Common myeloid progenitor, CD34-positive (primary cell): ENCODE measurements at regions of chr5 and their contacts with region 1.

Region 1: DNA sequence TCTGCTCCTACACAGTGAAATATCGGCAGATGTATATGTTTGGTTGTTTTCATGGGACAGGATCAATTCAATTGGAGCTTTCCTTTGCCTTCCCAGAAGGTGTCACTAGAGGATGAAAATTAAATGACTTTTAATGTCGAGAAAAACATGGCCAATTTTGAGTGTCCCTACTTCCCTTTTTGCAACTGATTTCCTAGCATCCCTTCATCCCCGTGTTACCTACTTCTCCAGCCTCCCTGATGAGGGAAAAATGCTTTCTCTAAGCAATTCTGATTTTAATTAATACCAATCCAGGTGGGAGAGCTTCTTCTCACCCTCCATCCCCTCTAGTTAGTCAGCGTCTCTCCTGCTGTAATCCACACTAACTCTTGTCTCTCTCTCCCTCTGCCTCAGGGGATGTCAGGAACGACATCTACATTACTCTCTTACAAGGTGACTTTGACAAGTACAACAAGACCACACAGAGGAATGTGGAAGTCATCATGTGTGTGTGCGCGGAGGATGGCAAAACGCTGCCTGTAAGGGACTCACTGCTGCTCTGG is 64.9 kb downstream of the DOCK2 start:
- DNase-seq: peak; percentile 9 to 32 (median 23)
- H3K4me3 ChIP-seq: no peak overlapping the region
- H3K27ac ChIP-seq: no peak overlapping the region
- H3K4me1 ChIP-seq: no peaks in the 10 kb centered on the region
- H3K27me3 ChIP-seq: no peaks in the 10 kb centered on the region

Region 2: DNA sequence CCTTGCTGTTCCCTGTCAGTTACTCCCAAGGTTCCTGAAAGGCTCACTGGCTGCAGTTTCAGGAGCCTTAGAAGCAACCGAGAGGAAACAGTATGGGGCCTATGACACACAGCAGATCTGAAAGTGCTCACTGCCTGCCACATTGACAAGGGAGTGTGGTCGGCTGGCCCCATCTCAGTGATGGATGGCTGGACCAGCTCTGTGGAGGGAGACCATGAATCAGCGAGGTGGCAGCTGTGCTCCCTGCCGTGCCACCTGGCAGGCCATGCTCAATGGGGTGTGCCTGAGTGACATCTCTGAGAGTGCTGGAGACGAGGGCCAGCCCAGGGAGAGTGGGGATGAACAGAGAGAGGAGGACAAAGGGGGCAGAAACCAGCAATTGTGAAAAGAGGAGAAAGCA is 15.8 kb before region 1 on chr5:
- CTCF ChIA-PET with region 1: no interaction called
- POLR2A ChIA-PET with region 1: no interaction called
- DNase-seq: no peak
- H3K4me3 ChIP-seq: no peak overlapping the region
- H3K27ac ChIP-seq: no peak overlapping the region
- H3K4me1 ChIP-seq: no peaks in the 10 kb centered on the region
- H3K27me3 ChIP-seq: no peaks in the 10 kb centered on the region

Region 3: DNA sequence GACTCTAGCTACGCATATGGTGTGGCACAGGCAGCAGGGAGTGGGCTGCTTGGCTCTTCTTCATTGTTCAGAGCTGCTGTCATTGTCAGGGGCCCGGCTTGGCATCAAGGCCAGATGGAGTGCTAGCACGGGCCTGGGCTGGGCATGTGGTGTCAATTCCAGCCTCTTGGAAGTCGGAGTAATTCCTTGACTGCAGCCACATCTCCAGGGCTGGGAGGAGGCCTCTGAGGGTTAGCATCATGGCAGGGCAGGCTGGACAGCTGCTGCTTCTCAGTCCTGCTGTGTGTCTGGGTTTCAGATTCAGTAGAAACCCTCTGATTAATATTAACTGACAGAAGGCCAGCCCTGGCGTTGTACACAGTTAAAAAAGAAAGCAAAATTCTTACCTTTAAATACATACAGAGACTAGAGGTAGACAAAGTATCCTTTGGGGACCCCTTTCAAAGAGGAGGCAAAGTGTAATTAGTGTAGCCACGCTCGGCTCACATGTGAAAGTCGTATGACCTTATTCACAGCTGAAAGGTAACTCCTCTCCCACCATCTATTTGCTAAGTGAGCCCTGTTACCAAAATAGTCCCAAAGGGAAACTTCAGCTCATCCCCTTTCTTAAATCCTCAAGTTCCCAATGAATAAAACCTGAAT is 61.5 kb after region 1 on chr5:
- CTCF ChIA-PET with region 1: no interaction called
- POLR2A ChIA-PET with region 1: no interaction called
- DNase-seq: no peak
- H3K4me3 ChIP-seq: no peak overlapping the region
- H3K27ac ChIP-seq: peak overlapping the region in 1 of 2 experiments; percentile 2
- H3K4me1 ChIP-seq: no peaks in the 10 kb centered on the region
- H3K27me3 ChIP-seq: no peaks in the 10 kb centered on the region

Region 4: DNA sequence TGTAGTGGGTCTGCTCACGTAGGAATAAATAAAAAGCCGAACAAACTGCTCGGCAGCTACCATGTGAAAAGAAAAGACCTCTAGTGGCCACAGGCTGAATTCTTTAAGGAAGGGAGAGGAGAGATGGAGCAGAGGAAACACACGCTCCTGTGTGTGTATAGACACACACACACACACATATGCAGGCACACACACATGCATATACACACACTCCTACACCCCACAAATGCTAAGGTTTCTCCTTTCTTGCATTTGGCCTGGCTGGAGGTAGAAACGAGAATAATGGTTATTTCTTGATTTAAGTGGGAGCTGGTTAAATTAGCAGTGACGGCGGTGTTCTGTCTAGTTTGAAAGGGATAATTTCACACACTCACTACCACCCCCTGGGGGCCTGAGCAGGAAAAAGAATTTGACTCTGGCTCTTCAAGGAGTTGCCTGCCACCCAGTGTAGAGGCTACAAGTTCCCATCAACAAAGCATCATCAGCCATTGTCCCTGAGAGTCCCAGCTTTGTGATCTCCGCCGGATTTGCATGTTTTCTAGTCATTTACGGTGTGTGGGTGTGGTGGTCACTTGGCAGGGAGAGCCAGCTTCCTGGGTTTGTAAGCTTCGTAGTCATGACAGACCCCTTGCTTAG is 278.6 kb after region 1 on chr5 and contains the start of gene INSYN2B:
- CTCF ChIA-PET with region 1: interaction called, 20 read pairs
- POLR2A ChIA-PET with region 1: no interaction called
- DNase-seq: peak; percentile 74 to 88 (median 76)
- H3K4me3 ChIP-seq: peak within 1 kb of the TSS in 1 of 7 experiments; percentile 47
- H3K27ac ChIP-seq: no peak within 1 kb of the TSS
- H3K4me1 ChIP-seq: peaks cover 0 to 3% (median 0%) of the 10 kb centered on the region in 4 experiments
- H3K27me3 ChIP-seq: no peaks in the 10 kb centered on the region